PC-3 (cell line): ENCODE measurements at regions of chr4 and their contacts with region 1.

Region 1: DNA sequence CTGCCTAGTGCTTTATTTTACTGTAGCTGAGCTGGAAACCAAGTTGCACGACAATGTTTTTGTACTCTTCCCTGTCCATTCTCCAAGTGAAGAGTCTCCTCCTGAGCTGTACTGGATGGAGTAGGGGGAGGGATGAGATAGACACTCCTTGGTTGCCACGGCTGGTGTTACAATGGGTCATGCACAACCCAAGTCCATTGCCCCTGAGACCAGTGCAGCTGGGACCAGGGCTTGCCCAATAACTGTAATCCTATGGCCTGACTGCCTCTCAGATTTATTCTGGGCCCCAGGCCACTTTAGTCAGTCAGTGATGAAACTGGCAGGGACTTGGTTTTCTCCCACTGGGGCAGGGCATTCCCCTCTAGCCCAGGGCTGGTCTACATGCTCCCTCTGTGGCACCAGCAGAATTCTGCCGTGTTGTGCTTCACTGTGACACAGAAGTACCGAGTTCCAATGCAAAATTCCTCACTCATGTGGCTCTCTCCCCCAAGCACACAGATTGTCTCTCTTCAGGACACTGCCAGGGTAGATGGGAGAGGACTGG is 203.3 kb upstream of the PCDH18 start:
- DNase-seq: no peak
- ATAC-seq: no peak
- H3K4me3 ChIP-seq: no peak overlapping the region
- H3K27ac ChIP-seq: no peak overlapping the region
- H3K4me1 ChIP-seq: no peaks in the 10 kb centered on the region
- H3K27me3 ChIP-seq: no peaks in the 10 kb centered on the region
- CTCF ChIP-seq: no peak

Region 2: DNA sequence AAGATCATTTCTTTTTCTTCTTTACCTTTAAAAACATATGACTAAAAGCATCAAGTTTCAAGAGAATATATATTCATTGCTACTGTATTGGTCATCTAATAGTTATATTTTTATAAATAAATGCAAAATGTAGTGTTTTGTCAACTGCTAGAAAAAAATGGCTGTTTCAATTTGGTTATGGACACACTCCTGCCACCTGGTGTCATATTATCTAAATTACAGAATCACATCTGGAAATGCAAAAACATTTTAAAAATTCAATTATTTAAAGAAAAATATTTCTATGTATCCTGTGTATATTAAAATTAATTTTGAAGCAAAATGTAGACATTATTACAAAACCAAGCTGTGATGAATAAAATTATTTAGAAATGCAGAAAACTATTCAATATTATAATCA is 126.0 kb after region 1 on chr4:
- CTCF ChIA-PET with region 1: no interaction called
- POLR2A ChIA-PET with region 1: no interaction called
- intact Hi-C with region 1: loop called (anchors 1 kb)
- DNase-seq: peak; percentile 25
- ATAC-seq: no peak
- H3K4me3 ChIP-seq: no peak overlapping the region
- H3K27ac ChIP-seq: no peak overlapping the region
- H3K4me1 ChIP-seq: no peaks in the 10 kb centered on the region
- H3K27me3 ChIP-seq: no peaks in the 10 kb centered on the region
- CTCF ChIP-seq: peak; percentile 38